ENCODE measurements at regions of chr19 and their contacts with region 1.

Region 1: DNA sequence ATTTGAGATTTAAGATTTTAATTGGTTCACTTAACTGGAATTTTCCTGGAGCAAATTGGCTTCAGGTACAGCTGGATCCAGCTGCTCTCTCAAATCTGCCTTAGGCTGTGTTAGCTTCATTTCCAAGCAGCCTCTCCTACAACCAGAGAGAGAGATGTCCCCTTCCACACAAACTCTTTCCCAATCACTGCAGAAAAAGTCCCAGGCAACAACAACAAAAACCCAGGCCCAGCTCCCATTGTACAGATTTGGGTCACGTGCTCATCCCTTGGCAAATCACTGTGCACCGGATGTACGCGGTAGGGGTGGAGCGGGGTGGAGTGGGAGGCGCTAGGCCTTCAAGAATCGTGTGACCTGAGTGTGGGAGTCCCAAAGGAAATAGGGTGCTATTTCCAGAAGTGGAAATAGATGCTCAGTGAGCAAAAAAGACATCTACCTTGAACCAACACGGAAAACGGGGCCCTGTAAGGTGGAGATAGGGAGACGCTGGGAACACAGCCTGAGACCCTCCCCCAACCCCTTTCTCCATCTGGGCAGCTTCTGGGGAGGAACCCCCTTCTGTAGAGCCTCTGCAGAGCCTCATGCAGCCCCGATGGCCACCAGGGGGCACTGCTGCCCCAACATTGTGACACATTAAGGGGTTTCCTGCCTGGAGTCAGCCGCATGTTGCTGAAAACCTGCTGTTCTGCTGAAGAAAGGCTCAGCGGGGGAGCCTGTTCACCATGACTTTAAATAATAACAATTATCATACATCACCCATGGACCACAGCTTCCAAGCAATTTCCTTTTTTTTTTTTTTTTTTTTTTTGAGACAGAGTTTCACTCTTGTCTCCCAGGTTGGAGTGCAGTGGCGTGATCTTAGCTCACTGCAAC is 25.4 kb downstream of the HPN start:
- DNase-seq: no peak
- H3K4me3 ChIP-seq: no peak overlapping the region
- H3K27me3 ChIP-seq: no peaks in the 10 kb centered on the region
- CTCF ChIP-seq: peak; percentile 94

Region 2: DNA sequence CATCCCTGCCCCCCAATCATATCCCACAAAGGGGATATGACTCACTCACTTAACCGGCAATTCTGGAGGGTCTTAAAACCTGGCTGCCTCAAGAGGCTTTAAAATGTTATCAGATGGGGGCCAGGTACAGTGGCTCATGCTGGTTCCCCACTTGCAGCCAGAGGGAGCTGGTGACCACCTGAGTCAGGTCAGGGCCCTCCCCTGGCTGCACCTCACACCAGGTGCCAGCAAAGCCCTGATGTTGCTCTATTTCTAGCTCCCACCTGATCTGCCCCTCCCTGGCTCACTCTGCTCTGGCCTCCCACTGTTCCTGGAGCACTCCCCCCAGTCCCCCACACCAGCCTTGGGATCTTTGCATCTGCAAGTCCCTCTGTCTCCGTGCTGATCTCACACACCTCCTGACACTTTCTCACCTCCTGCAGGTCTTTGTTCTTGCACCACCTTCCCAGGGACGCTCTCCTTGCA is 11.2 kb before region 1 on chr19:
- CTCF ChIA-PET with region 1: interaction called, 24 read pairs
- POLR2A ChIA-PET with region 1: no interaction called
- DNase-seq: no peak
- H3K4me3 ChIP-seq: no peak overlapping the region
- H3K27me3 ChIP-seq: peaks cover 8% of the 10 kb centered on the region
- CTCF ChIP-seq: no peak

Region 3: GRCh38 chr19:35090506-35091237 is 23.7 kb after region 1 on chr19:
- CTCF ChIA-PET with region 1: interaction called, 43 read pairs
- POLR2A ChIA-PET with region 1: no interaction called
- DNase-seq: no peak
- H3K4me3 ChIP-seq: no peak overlapping the region
- H3K27me3 ChIP-seq: no peaks in the 10 kb centered on the region
- CTCF ChIP-seq: peak; percentile 69

Region 4: GRCh38 chr19:35098413-35099049 is 31.6 kb after region 1 on chr19:
- CTCF ChIA-PET with region 1: interaction called, 18 read pairs
- POLR2A ChIA-PET with region 1: no interaction called
- DNase-seq: no peak
- H3K4me3 ChIP-seq: no peak overlapping the region
- H3K27me3 ChIP-seq: peaks cover 2% of the 10 kb centered on the region; the same call in 1 of the 2 replicates
- CTCF ChIP-seq: no peak

Region 5: DNA sequence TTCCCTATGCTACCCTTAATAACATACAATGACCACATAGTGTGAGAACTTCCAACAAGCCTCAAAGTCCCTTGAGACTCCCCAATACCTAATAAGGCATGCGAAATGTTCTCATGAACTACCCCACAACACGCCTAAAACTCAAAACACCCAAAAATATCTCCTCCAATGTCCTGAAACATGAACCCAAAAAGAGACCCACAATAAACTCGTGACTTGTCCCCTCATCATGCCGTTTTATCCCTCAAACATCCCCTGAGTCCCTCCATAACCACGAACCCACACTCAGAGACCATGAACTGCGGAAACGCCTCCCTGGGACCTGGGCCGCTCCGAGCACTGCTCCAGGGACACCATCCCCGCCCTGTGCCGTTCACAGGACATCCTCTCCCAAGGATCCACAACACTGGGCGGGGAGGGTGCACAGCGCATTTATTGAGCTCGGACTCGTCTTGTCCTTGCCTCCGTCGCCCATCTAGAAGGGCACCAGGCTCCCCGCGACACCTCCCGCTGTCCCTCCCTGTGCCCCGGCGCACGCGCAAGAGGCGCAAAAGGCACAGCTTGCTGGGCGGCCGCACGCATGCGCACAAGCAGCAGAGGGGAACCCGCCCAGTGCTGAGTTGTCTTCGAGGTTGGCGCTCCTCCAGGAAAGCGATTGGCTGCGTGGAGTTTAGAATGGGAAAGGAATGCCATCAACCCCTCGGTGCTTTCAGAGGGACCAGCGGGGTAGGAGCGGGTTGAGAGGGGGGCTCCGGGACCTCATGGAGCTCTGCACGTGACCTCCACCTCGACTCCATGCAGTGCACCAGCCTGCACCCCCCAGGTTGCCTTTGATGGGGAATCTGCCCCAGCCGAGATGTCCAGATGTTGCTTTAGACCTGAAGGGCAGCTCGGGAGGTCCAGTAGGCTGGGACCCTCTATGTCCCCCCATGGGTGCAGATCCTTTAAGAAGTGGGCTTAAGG is 57.5 kb after region 1 on chr19:
- CTCF ChIA-PET with region 1: interaction called, 11 read pairs
- POLR2A ChIA-PET with region 1: no interaction called
- DNase-seq: peak; percentile 53
- H3K4me3 ChIP-seq: peak overlapping the region; percentile 52
- H3K27me3 ChIP-seq: no peaks in the 10 kb centered on the region; the same call in 1 of the 2 replicates
- CTCF ChIP-seq: no peak

Region 6: DNA sequence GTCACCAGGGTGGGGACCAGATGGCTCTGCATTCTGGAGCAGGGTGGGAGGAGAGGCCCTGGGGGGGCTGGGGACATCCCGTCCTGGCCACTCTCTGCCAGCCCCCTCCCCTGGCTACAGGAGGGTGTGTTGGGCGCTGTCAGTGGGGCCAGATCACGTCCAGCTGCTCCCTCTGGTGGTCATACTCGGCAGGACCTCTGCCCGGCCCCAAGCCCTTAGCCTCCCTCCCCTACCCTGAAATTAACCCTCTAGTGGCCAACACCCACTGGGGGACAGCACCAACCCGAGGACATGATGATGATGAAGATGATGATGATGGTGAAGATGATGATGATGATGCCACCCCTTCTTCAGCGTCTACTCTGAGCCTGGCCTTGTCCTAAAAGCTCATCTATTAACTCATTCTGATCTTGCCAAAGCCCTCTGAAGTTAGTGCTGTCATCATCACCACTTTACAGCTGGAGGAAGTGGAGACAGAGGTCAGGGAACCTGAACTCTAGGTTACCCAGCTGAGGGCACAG is 68.5 kb after region 1 on chr19:
- CTCF ChIA-PET with region 1: interaction called, 77 read pairs
- POLR2A ChIA-PET with region 1: no interaction called
- DNase-seq: no peak
- H3K4me3 ChIP-seq: no peak overlapping the region
- H3K27me3 ChIP-seq: peaks cover 2% of the 10 kb centered on the region; the same call in 1 of the 2 replicates
- CTCF ChIP-seq: peak; percentile 93

Region 7: GRCh38 chr19:35140962-35141637 is 74.2 kb after region 1 on chr19:
- CTCF ChIA-PET with region 1: interaction called, 77 read pairs
- POLR2A ChIA-PET with region 1: no interaction called
- DNase-seq: no peak
- H3K4me3 ChIP-seq: no peak overlapping the region
- H3K27me3 ChIP-seq: peaks cover 2% of the 10 kb centered on the region
- CTCF ChIP-seq: peak; percentile 72

Region 8: GRCh38 chr19:35389192-35389861 is 322.4 kb after region 1 on chr19:
- CTCF ChIA-PET with region 1: no interaction called
- POLR2A ChIA-PET with region 1: no interaction called
- DNase-seq: no peak
- H3K4me3 ChIP-seq: no peak overlapping the region
- H3K27me3 ChIP-seq: no peaks in the 10 kb centered on the region
- CTCF ChIP-seq: no peak

Region 9: DNA sequence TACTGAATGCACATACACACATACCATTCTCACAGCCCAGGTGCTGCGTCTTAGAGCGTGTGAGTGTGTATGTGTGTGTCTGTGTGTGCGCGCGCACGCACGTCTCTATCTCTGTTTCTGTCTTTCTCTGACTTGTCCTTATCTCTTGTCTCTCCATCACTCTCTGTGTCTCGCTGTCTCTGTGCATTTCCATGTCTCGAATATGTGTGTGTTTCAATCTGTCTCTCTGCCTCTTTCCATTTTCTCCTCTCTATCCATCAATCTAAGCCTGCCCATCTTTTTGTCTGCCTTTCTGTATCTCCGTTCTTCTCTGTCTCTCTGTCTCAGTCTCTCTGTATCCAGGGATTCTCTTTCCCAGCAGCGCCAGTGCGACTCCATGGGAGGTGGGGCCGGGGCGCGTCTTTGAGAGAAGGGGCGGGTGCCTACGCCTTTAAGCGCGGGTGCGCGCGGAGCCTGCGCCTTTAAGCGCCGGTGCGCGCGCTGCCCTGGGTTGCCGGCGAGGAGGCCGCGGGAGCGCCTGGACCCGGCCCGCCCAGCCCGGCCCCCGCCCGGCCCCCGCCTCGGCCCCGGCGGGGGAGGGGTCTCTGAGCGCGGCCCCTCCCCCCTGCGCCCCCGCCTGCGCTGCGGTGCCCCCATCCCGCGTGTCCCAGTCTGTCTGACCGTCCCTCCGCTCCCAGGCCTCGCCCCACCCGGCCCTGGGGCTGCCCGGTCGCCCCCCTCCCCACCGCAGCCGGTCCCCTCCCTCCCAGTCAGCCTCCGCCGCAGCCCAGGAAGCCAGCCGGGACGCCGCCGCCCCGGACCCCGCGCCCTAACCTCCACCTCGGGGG is 869.2 kb after region 1 on chr19 and contains the start of gene LRFN3:
- CTCF ChIA-PET with region 1: no interaction called
- POLR2A ChIA-PET with region 1: no interaction called
- DNase-seq: no peak
- H3K4me3 ChIP-seq: peak within 1 kb of the TSS; percentile 65
- H3K27me3 ChIP-seq: no peaks in the 10 kb centered on the region
- CTCF ChIP-seq: no peak
- polyA plus RNA-seq, gene LRFN3: 0.83 and 1.8 TPM in 2 replicates

Measured in BJ (cell line).